Right ventricle myocardium superior (tissue), 1 donor: ENCODE measurements at regions of chr17 and their contacts with region 1.

Region 1: DNA sequence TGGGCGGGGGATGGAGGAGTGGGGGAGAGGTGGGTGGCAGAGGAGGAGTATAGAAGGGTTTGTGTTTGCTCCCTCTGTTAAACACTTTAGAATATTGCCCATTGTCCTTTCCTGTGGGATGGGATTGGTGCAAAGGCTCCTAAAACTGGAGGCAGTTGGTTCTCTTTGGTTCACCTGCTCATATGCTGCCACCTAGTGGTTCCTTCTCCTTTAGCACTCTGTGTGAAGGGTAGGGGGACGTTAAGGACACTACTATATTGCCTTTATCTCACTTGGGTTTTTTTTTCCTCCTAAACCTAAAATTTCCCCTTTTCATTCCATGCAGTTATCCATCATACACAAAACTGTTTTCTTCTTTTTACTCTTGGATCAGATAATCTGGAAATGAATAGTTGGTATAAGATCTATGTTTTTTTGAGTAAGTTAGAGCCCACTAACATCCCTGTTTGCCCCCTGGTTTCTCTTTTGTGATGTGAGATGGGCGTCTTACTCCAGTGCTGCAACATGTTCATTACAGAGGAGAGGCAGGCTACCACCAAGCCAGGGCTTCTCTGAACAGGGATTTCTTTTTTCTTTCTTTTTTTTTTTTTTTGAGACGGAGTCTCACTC is 23.8 kb downstream of the SNX11 start:
- DNase-seq: no peak
- ATAC-seq: peak; percentile 93

Region 2: DNA sequence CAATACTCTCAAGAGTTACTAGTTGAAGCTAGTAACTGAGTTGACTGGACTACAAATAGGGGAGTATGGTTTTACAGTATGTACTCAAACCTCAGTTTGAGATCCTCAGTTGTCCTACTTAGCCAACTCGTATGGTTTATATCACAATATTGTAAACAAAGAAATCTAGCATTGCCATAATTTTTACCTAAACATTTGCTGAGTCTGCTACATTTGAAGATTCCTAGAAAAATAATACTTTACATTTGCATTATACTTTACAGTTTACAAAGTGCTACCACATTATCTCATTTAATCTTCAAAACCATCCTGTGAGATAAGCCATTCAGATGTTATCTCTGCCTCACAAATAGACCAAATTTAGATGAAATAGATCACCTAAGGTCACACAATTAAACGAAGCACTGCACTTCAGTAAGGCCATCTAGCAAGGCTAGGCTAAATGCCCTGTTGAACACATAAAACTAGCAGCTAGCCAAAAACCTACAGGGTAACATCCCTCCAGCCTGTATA is 46.3 kb before region 1 on chr17:
- intact Hi-C with region 1: loop called (anchors 5 kb)
- DNase-seq: no peak
- ATAC-seq: no peak